Naive thymus-derived CD4-positive, alpha-beta T cell (primary cell): ENCODE measurements at regions of chr7 and their contacts with region 1.

Region 1: GRCh38 chr7:121500360-121501058 is 104.4 kb upstream of the FAM3C start:
- DNase-seq: no peak
- ATAC-seq: no peak
- H3K4me3 ChIP-seq: no peak overlapping the region
- H3K4me3 Mint-ChIP-seq: no peak overlapping the region
- H3K27ac ChIP-seq: no peak overlapping the region
- H3K27ac Mint-ChIP-seq: no peak overlapping the region
- H3K4me1 ChIP-seq: no peaks in the 10 kb centered on the region
- H3K4me1 Mint-ChIP-seq: peaks cover 0 to 17% (median 0%) of the 10 kb centered on the region in 7 donors
- H3K27me3 ChIP-seq: no peaks in the 10 kb centered on the region
- H3K27me3 Mint-ChIP-seq: peaks cover 0 to 12% (median 0%) of the 10 kb centered on the region in 5 donors

Region 2: GRCh38 chr7:121451367-121452094 is 49.0 kb before region 1 on chr7:
- CTCF ChIA-PET with region 1: no interaction called
- POLR2A ChIA-PET with region 1: no interaction called
- intact Hi-C with region 1: no loop called
- DNase-seq: no peak
- ATAC-seq: no peak
- H3K4me3 ChIP-seq: no peak overlapping the region
- H3K4me3 Mint-ChIP-seq: no peak overlapping the region
- H3K27ac ChIP-seq: no peak overlapping the region
- H3K27ac Mint-ChIP-seq: no peak overlapping the region
- H3K4me1 ChIP-seq: no peaks in the 10 kb centered on the region
- H3K4me1 Mint-ChIP-seq: peaks cover 0 to 4% (median 0%) of the 10 kb centered on the region in 7 donors
- H3K27me3 ChIP-seq: no peaks in the 10 kb centered on the region
- H3K27me3 Mint-ChIP-seq: peaks cover 0 to 2% (median 0%) of the 10 kb centered on the region in 5 donors

Region 3: GRCh38 chr7:121519548-121520521 is 19.3 kb after region 1 on chr7:
- CTCF ChIA-PET with region 1: no interaction called
- POLR2A ChIA-PET with region 1: no interaction called
- intact Hi-C with region 1: loop called in 1 of 2 experiments (anchors 2 kb)
- DNase-seq: no peak
- ATAC-seq: no peak
- H3K4me3 ChIP-seq: no peak overlapping the region
- H3K4me3 Mint-ChIP-seq: no peak overlapping the region
- H3K27ac ChIP-seq: no peak overlapping the region
- H3K27ac Mint-ChIP-seq: no peak overlapping the region
- H3K4me1 ChIP-seq: no peaks in the 10 kb centered on the region
- H3K4me1 Mint-ChIP-seq: peaks cover 0 to 26% (median 0%) of the 10 kb centered on the region in 7 donors
- H3K27me3 ChIP-seq: no peaks in the 10 kb centered on the region
- H3K27me3 Mint-ChIP-seq: peaks cover 0 to 4% (median 0%) of the 10 kb centered on the region in 5 donors

Region 4: DNA sequence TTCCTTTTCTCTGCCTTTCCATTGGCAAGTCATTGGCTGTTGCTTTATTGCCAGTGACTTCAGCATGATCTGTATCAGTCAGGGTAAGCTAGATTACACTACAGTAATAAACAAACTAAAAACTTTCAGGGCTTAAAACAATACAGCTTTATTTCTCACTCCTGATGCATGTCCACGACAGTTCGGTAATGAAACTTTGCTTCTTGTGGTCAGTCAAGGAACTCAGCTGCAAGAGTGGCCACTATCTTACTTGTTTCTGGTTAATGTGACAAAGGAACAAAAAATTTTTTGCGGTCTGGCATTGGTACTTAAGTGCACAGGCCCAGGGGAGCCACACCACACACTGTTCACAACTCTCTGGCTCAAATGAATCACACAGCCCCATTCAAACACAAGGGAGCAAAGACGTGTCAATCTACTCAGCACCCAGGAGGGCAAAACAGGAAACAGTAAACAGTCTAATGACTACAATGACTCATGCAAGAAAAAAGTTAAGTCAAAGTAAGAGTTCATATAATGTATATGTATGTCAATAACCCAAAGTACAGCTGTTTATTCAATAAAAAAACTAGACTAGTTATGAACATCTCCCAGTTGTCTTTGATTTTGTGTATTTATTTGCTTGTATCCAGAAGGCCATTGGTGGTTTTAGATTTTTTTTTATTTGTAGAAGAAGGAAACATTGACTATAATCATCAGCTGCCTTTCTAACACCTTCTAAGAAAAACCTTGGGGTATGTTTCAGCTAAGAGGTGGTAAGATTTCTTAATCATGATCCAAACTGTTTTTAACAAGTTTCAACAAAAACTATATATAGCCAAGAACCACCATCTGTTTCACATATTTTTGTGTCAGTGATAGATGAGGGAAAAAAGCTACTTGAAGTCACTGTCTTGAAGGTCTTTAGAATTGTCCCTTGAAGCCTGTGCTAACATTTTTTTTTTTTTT is 30.0 kb after region 1 on chr7:
- CTCF ChIA-PET with region 1: no interaction called
- POLR2A ChIA-PET with region 1: no interaction called
- intact Hi-C with region 1: loop called in 1 of 2 experiments (anchors 1 kb)
- DNase-seq: peak in 1 of 9 donors; percentile 60
- ATAC-seq: peak; percentile 94
- H3K4me3 ChIP-seq: no peak overlapping the region
- H3K4me3 Mint-ChIP-seq: peak overlapping the region in 1 of 10 donors; percentile 54
- H3K27ac ChIP-seq: no peak overlapping the region
- H3K27ac Mint-ChIP-seq: peak overlapping the region in 3 of 9 donors; percentile 3 to 91 (median 51)
- H3K4me1 ChIP-seq: peaks cover 0 to 6% of the 10 kb centered on the region in 2 donors
- H3K4me1 Mint-ChIP-seq: peaks cover 0 to 45% (median 0%) of the 10 kb centered on the region in 7 donors
- H3K27me3 ChIP-seq: no peaks in the 10 kb centered on the region
- H3K27me3 Mint-ChIP-seq: peaks cover 0 to 4% (median 0%) of the 10 kb centered on the region in 5 donors